ENCODE measurements at regions of chr17 and their contacts with region 1.

Region 1: DNA sequence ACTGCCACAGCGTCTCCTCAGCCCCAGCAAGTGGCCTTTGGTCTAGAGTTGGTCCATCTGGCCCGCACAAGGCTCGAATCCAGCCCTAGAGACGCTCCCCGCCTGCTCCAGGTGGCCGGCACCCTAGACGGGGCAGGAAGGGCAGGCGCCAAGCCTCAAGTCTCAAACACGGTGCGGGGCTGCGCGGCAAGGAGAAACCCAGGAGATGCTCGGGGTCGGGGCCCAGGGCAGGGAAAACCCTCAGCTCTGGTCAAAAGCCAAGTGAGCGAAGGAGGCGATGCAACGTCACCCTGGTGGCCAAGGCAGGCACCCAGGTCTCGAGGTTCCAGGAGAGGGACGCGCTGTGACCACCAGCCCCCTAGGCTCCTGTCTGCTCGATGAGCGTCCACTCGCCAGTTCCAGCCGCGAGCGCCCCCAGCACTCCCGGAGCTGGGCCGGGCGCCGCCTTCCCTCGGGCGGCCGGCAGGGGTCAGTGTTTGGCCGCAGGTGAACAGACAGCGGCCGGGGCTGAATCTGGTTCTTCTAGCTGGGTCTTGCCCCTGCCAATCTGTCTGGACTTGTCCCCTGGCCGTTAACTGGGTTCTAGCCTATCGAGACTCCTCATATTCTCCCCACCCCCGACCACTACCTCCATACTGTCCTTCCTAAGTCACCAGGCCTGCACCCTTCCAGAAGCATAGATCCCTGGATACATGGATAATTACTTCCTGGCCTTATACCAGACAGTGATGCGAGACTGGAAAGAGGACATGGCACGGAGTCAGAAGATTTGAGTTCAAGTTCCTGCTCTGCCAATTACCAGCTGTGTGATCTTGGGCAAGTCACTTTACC is 44.0 kb downstream of the PRAC1 start:
- DNase-seq: peak; percentile 28
- ATAC-seq: peak; percentile 97
- H3K4me3 ChIP-seq: peak overlapping the region; percentile 12 to 26; a peak in 2 of 4 replicates
- H3K27ac ChIP-seq: peak overlapping the region; percentile 12; the same call in 1 of the 2 replicates
- H3K4me1 ChIP-seq: peaks cover 0 to 13% of the 10 kb centered on the region in 2 experiments; a peak in 2 of 4 replicates
- H3K27me3 ChIP-seq: no peaks in the 10 kb centered on the region
- CTCF ChIP-seq: peak; percentile 99 to 100 (median 99)
- POLR2A ChIP-seq: no peak
- RAD21 ChIP-seq: peak; percentile 98

Region 2: DNA sequence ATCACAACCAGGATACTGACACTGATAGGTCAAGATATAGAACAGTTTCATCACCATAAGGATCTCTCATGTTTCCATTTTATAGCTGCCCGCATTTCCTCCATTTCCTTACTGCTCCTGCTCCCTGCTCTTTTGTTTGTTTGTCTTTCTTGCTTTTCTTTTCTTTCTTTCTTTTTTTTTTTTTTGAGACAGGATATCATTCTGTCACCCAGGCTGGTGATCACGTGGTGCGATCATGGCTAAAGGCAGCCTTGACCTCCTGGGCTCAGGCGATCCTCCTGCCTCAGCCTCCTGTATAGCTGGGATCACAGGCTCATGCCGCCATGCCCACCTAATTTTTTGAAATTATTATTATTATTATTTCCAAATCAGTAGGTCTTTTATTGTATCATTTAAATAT is 12.3 kb after region 1 on chr17:
- CTCF ChIA-PET with region 1: interaction called, 32 read pairs
- POLR2A ChIA-PET with region 1: interaction called, 3 read pairs
- RAD21 ChIA-PET with region 1: no interaction called
- intact Hi-C with region 1: no loop called
- DNase-seq: no peak
- ATAC-seq: no peak
- H3K4me3 ChIP-seq: no peak overlapping the region
- H3K27ac ChIP-seq: no peak overlapping the region
- H3K4me1 ChIP-seq: no peaks in the 10 kb centered on the region
- H3K27me3 ChIP-seq: no peaks in the 10 kb centered on the region
- CTCF ChIP-seq: no peak
- POLR2A ChIP-seq: no peak
- RAD21 ChIP-seq: no peak

Region 3: DNA sequence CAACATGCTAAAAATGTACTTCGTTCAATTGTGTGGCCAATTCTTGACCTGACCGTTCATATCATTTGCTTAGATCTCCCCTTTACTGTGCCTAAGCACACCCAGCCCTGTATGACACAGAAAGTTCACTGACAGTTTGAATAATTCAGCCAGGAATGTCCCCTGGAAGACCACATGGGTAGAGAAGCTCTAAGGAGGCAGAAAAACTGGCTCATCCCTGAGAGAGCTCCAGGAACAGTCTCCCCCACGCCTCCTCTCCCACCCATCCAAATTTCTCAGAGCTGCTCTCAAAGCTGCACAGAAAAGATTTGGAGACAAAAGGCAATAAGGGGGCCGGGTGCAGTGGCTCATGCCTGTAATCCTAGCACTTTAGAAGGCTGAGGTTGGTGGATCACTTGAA is 32.7 kb after region 1 on chr17:
- CTCF ChIA-PET with region 1: interaction called, 13 read pairs
- POLR2A ChIA-PET with region 1: no interaction called
- RAD21 ChIA-PET with region 1: no interaction called
- intact Hi-C with region 1: no loop called
- DNase-seq: no peak
- ATAC-seq: no peak
- H3K4me3 ChIP-seq: no peak overlapping the region
- H3K27ac ChIP-seq: no peak overlapping the region
- H3K4me1 ChIP-seq: no peaks in the 10 kb centered on the region
- H3K27me3 ChIP-seq: 0 out of 2 replicates have a peak, but pooled peaks cover 4% of the 10 kb centered on the region
- CTCF ChIP-seq: no peak
- POLR2A ChIP-seq: no peak
- RAD21 ChIP-seq: no peak

Region 4: DNA sequence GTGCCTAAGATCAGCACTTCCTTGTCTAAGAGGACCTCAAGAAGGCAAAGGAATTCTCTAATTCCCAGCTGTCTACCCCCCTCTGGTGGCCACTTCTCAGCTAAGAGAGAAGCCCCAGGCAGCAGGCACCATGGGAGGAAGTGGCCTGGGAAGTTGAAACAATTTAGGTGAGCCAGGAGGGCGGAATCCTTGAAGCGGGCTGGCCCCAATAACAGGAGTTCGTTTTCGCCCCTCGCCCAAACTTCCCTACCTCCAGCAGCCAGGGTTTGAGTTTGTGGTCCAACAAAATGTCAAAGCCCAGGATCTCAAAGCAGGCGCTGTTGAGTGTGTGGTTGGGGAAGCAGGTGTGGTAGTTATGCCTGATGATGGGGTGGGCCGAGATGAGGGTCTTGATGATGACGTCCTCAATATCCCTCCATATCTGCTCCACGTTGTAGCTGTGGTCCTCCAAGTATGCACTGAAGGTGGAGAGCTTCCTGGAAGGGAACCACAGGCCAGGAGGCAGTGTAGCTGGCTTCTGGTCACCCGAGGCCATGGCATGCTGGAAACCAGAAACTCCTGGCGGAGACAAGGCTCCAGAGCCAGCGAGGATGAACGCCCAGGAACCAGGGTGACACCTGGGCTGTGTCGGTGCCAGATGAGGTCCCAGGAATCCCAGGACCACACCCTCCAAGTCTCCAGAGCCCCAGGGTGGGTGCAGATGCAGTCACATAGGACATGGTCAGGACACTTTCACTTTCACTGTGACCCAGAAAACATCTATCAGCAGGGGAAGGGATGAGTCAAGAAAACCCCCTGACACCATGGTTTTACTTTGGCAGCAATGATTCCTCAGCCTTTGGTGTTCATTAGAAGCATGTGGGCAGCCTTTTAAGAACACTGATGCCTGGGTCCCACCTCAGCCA is 113.0 kb after region 1 on chr17:
- CTCF ChIA-PET with region 1: interaction called, 78 read pairs
- POLR2A ChIA-PET with region 1: interaction called, 8 read pairs
- RAD21 ChIA-PET with region 1: interaction called, 12 to 16 read pairs
- intact Hi-C with region 1: loop called (anchors 1 kb)
- DNase-seq: peak; percentile 87
- ATAC-seq: peak; percentile 92
- H3K4me3 ChIP-seq: no peak overlapping the region
- H3K27ac ChIP-seq: no peak overlapping the region
- H3K4me1 ChIP-seq: peaks cover 12 to 32% of the 10 kb centered on the region in 2 experiments
- H3K27me3 ChIP-seq: no peaks in the 10 kb centered on the region
- CTCF ChIP-seq: peak; percentile 94 to 98 (median 98)
- POLR2A ChIP-seq: no peak
- RAD21 ChIP-seq: peak; percentile 97

Region 5: GRCh38 chr17:48871551-48872351 is 193.4 kb after region 1 on chr17:
- CTCF ChIA-PET with region 1: interaction called, 12 read pairs
- POLR2A ChIA-PET with region 1: no interaction called
- RAD21 ChIA-PET with region 1: interaction called in 1 of 2 experiments, 4 read pairs
- intact Hi-C with region 1: no loop called
- DNase-seq: no peak
- ATAC-seq: no peak
- H3K4me3 ChIP-seq: no peak overlapping the region
- H3K27ac ChIP-seq: no peak overlapping the region
- H3K4me1 ChIP-seq: peaks cover 6 to 8% of the 10 kb centered on the region in 2 experiments; a peak in 2 of 4 replicates
- H3K27me3 ChIP-seq: no peaks in the 10 kb centered on the region
- CTCF ChIP-seq: no peak
- POLR2A ChIP-seq: no peak
- RAD21 ChIP-seq: no peak

Measured in HCT116 (cell line).